Activated T-helper 1 cell treated with anti-CD3 and anti-CD28 coated beads, Interleukin-12 subunit alpha, Interleukin-12 subunit beta, Interleukin-2, Interleukin-4 antibody, amounts not matched to agents 30 ng/mL and 10 ng/mL and 1 ng/mL, durations not matched to agents 14 hours and 24 hours and 36 hours (primary cell): ENCODE measurements at regions of chr7 and their contacts with region 1.

Region 1: DNA sequence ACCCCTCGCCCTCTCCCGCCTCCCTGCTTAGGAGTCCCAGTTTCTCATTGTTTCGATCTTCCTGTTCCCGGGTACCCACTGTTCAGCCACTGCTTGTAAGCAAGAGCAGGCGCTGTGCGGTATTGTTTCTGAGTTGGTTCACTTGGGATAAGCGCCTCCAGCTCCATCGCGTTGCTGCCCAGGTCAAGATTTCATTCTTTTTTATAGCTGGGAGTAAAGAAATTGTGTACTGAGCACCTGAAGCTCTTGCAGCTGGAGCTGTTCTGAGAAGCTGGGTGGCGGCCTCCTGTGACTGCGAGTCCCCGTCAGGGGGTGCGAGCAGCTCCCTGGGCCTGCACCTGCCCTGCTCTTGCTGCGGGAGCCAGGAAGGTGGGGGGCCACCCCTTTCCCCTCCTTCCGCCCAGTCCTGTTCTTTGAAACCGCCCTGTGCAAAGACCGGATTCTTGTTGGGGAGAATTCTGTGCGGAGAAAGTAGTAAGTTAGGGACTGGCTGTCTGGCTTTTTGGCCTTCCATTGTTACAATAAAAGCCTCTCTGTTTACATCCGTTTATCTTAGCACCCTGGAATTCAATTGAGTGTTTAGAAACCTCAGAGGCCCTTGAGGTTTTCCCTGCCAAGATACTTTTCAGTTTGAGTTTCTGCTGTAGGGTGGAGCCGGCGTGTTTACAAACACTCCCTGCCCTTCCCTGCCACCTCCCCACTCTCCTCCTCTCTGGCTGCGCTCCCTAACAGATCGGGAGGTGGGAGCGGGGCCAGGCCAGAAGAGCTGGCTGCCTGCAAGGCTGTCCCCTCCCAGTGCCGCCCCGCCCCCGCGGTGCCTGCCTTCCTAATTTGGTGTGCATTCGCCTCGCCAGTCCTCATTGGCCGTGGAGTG is 30.8 kb upstream of the AP5Z1 start:
- DNase-seq: peak; percentile 73
- H3K4me3 Mint-ChIP-seq: peak overlapping the region; percentile 83
- H3K27ac Mint-ChIP-seq: peak overlapping the region; percentile 93
- H3K4me1 Mint-ChIP-seq: peaks cover 67% of the 10 kb centered on the region
- H3K27me3 Mint-ChIP-seq: no peaks in the 10 kb centered on the region

Region 2: GRCh38 chr7:4641667-4642467 is 102.8 kb before region 1 on chr7:
- intact Hi-C with region 1: loop called (anchors 1 kb)
- DNase-seq: peak; percentile 96
- H3K4me3 Mint-ChIP-seq: peak overlapping the region; percentile 93
- H3K27ac Mint-ChIP-seq: peak overlapping the region; percentile 86
- H3K4me1 Mint-ChIP-seq: peaks cover 19% of the 10 kb centered on the region
- H3K27me3 Mint-ChIP-seq: no peaks in the 10 kb centered on the region

Region 3: DNA sequence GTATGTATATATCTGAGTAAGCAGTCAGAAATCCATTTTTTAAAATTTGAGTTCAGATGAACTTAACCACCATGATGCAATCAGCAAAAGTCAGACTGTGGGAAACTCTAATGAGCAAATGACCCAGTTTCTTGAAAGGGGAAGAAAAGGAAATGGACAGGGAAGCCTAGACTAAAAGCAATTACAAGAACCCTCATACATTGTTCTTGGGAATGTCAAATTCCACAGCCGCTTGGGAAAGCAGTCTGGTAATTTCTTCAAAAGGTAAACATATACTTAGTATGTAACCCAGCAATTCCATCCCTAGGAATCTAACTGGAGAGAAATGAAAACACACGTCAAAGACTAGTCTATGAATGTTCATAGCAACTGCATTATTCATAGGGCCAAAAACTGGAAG is 79.0 kb before region 1 on chr7:
- intact Hi-C with region 1: no loop called
- DNase-seq: no peak
- H3K4me3 Mint-ChIP-seq: no peak overlapping the region
- H3K27ac Mint-ChIP-seq: no peak overlapping the region
- H3K4me1 Mint-ChIP-seq: peaks cover 10% of the 10 kb centered on the region
- H3K27me3 Mint-ChIP-seq: no peaks in the 10 kb centered on the region

Region 4: GRCh38 chr7:4725014-4725849 is 19.4 kb before region 1 on chr7:
- intact Hi-C with region 1: loop called (anchors 1 kb)
- DNase-seq: peak; percentile 64
- H3K4me3 Mint-ChIP-seq: peak overlapping the region; percentile 87
- H3K27ac Mint-ChIP-seq: peak overlapping the region; percentile 90
- H3K4me1 Mint-ChIP-seq: peaks cover 24% of the 10 kb centered on the region
- H3K27me3 Mint-ChIP-seq: no peaks in the 10 kb centered on the region